ENCODE measurements at regions of chr11 and their contacts with region 1.

Region 1: GRCh38 chr11:2151500-2152257 is 9.3 kb downstream of the INS start:
- DNase-seq: peak; percentile 77
- ATAC-seq: peak; percentile 53 to 58

Region 2: DNA sequence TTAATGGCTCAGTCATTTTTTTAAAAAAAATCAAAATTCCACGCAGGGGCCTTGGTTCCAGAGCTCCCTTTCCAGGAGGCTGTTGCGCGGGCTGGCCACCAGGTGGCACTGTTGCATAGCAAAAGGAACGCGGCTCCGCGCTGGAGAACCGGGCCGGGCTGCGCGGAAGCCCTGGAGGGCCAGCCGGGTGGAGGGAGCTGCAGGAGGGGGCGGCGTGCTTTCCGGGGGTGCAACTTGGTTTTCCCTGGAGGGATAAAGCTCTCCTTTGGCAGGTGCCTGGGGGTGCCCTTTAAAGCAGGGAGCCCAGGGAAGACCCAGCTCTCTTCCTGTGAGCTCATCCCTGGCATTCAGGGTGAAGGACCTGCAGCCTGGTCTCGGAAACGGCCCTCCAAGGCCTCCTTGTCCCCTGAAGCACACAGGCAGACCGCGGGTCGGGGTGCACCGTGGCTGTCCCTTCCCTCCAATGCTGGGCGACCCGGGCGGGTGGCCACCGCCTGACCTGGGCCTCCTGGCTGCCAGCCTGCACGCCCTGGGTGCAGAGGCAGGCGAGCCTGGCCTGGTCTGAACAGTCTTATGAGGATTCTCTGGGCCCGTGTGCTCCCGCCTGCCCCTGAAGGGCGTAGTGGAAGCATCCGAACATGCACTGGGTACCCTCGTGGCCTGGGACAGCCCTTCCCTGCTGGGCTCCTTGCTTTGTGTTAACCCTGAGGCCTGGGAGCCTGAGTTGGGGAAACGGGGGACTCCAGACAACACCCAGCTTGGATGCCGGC is 498.7 kb before region 1 on chr11:
- intact Hi-C with region 1: loop called (anchors 2 to 5 kb)
- DNase-seq: peak; percentile 77
- ATAC-seq: peak; percentile 83 to 88

Region 3: GRCh38 chr11:1694064-1694845 is 457.4 kb before region 1 on chr11:
- intact Hi-C with region 1: loop called (anchors 2 to 5 kb)
- DNase-seq: peak; percentile 88
- ATAC-seq: peak; percentile 97

Region 4: DNA sequence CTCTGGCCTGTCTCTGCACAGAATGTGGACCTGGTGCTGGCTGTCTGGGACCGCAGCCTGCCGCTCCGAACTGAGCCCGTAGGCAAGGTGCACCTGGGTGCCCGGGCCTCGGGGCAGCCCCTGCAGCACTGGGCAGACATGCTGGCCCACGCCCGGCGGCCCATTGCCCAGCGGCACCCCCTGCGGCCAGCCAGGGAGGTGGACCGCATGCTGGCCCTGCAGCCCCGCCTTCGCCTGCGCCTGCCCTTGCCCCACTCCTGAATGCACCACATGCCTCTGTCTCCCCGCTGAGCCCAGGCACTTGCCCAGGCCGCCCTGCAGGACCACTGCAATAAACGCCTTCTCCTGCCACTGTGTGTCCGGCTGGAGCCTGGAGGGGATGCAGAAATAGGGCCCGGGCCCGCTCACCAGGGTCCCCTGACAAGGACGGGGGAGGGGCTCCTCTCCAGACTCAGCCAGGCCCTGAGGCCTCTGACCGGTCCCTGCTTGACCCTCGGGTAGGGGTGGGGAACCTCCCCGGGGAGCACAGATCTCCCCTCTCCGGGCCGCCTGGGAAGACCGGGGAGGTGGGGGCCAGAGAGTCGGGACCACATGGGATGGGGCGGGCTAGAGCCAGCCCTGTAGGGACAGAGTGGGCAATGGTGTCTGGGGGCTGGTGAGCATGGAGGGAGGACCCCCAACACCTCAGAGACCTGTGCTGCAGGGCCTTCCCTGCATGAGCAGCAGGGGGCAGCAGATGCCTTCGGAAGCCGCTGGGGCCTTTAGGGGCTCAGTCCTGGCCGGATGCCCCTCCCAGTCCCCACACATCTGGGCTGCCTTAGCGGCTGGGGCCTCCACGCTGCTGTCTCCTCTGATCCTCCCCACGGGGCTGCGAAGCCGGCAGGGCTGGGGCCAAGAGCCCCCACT is 314.3 kb before region 1 on chr11:
- intact Hi-C with region 1: loop called (anchors 2 to 5 kb)
- DNase-seq: peak; percentile 70
- ATAC-seq: peak; percentile 52 to 69

Region 5: GRCh38 chr11:1882519-1883238 is 269.0 kb before region 1 on chr11:
- intact Hi-C with region 1: loop called in 1 of 2 experiments (anchors 10 kb)
- DNase-seq: peak; percentile 86
- ATAC-seq: peak; percentile 79 to 87